Activated CD8-positive, alpha-beta T cell treated with anti-CD3 and anti-CD28 coated beads for 36 hours (primary cell): ENCODE measurements at regions of chr16 and their contacts with region 1.

Region 1: DNA sequence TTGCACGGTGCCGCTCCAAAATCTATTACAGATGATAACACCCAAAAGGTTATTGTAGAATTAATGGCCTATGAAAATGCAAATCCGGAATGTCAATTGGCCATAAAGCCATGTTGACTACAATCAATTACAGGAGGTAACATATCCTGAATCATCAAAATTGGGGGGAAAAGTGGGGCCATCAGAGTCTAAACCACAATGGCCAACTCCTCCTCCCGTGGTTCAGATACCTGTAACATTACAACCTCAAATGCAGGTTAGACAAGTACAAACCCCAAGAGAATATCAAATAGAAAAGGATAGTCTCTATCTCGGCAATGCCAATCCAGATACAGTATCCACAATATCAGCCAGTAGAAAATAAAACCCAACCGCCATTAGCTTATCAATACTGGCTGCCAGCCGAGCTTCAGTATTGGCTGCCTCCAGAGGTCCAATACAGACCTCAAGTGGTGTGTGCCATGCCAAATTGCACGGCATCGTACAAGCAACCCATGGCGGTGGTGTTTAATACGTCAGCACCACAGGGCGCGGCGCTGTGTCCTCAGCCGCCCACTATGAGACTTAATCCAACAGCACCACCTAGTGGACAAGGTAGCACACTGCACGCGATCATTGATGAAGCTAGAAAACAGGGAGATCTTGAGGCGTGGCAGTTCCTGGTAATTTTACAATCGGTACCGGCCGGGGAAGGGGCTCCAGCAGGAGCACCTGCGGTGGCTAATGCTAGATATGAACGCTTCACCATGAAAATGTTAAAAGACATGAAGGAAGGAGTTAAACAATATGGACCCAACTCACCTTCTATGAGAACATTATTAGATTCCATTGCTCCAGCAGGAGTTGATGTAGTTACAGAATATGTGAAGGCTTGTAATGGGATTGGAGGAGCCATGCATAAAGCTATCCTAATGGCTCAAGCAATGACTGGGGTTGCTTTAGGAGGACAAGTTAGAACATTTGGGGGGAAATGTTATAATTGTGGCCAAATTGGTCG is 15.2 kb downstream of the FLYWCH1 start:
- DNase-seq: peak; percentile 95
- ATAC-seq: peak; percentile 99
- H3K4me3 Mint-ChIP-seq: no peak overlapping the region
- H3K27ac Mint-ChIP-seq: no peak overlapping the region
- H3K4me1 Mint-ChIP-seq: peaks cover 10% of the 10 kb centered on the region
- H3K27me3 Mint-ChIP-seq: no peaks in the 10 kb centered on the region
- CTCF ChIP-seq: peak; percentile 96

Region 2: DNA sequence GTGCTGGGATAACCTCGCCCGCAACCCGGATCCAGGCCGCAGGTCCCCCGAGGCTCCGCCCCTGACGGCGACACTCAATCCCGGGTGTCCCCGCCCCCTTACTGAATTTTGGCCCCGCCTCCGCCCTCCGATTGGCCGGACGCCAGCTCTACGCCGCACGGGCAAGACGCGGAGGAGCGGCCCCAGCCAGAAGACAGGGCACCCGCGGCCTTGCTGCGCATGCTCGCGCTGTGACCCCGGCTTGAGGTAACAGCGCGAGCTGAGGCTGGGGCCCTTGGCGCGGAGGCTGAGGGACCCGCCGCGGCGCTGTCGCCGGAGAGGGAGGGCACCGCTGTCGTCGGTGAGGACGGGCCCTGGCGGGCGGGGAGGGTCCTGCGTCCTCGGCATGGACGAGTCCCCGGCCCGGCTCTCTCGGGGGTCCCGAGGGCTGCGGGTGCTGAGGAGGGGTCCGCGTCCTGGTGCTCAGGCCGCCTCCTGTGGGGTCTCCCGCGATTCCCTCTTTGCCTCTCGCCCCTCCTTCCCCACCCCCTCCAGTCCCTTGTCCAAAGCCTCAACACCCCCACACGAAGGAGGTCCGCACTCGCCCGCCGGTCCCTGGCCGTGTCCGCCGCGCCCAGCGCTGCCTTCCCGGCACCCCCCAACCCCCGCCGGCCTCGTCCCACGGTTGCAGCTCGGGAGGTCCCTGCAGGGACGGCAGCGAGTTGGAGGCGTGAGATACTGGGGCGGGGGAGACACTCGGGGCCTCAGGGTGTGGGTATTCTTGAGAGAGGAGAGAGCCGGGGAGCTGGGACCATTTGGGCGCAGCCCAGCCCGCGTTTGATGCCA is 43.7 kb before region 1 on chr16 and contains the start of gene FLYWCH2:
- CTCF ChIA-PET with region 1: interaction called, 27 read pairs
- POLR2A ChIA-PET with region 1: no interaction called
- intact Hi-C with region 1: no loop called
- DNase-seq: peak; percentile 99
- ATAC-seq: peak; percentile 84
- H3K4me3 Mint-ChIP-seq: peak within 1 kb of the TSS; percentile 89
- H3K27ac Mint-ChIP-seq: peak within 1 kb of the TSS; percentile 91
- H3K4me1 Mint-ChIP-seq: peaks cover 13% of the 10 kb centered on the region
- H3K27me3 Mint-ChIP-seq: no peaks in the 10 kb centered on the region
- CTCF ChIP-seq: no peak
- total RNA-seq, gene FLYWCH2: 18.9 to 19.3 TPM

Region 3: DNA sequence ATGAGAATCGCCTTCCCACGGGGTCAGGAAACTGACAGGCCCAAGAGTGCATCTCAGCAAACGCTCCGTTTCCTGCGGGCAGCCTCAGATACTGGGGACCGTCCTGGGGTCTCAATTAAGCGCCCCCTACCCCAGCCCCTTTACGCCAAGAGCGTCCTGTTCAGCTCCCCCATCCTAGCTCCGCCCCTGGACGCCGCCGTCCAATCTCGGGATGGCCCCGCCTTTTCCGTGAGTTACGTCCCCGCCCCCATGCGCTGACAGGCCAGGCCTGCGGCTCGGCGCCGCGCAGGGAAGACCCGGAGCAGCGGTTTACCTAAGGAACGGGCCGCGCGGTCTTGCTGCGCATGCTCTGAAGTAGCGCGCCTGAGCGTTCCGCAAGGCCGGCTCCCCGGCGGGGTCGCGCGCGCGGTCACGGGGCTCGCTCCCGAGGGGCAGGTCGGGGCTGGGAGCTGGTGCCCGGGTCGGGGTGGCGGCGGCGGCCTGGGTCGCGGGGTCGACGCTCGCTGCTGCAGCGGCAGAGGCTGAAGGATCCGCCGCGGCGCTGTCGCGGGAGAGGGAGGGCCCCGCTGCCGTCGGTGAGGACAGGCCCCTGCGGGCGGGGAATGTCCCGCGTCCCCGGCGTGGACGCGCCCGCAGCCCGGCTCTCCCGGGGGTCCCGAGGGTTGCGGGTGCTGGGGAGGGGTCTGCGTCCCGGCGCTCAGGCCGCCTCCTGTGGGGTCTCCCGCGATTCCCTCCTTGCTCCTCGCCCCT is 15.2 kb before region 1 on chr16 and contains the start of gene FLYWCH1:
- CTCF ChIA-PET with region 1: interaction called, 45 read pairs
- POLR2A ChIA-PET with region 1: interaction called, 5 read pairs
- intact Hi-C with region 1: no loop called
- DNase-seq: peak; percentile 99
- ATAC-seq: peak; percentile 99
- H3K4me3 Mint-ChIP-seq: peak within 1 kb of the TSS; percentile 85
- H3K27ac Mint-ChIP-seq: peak within 1 kb of the TSS; percentile 81
- H3K4me1 Mint-ChIP-seq: peaks cover 27% of the 10 kb centered on the region
- H3K27me3 Mint-ChIP-seq: no peaks in the 10 kb centered on the region
- CTCF ChIP-seq: no peak
- total RNA-seq, gene FLYWCH1: 33.4 to 34.9 TPM

Region 4: DNA sequence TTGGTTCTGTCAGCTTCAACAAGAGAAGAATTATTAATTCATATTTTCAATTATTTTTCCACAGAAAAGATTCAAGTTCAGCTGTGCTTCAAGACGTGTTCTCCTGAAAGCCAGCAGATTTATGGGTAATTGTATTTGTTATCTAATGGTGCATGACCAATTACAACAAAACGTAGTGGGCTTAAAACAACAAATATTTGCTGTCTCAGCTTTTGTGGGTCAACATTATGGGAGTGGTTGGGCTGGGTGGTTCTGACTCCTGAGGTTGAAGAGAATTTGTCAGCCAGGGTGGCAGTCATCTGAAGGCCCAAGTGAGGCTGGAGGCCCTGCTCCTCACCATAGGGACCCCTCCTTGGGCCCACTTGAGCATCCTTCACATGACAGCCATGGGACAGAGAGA is 13.0 kb after region 1 on chr16:
- CTCF ChIA-PET with region 1: interaction called, 14 read pairs
- POLR2A ChIA-PET with region 1: interaction called, 3 read pairs
- intact Hi-C with region 1: no loop called
- DNase-seq: no peak
- ATAC-seq: no peak
- H3K4me3 Mint-ChIP-seq: no peak overlapping the region
- H3K27ac Mint-ChIP-seq: no peak overlapping the region
- H3K4me1 Mint-ChIP-seq: peaks cover 5% of the 10 kb centered on the region
- H3K27me3 Mint-ChIP-seq: no peaks in the 10 kb centered on the region
- CTCF ChIP-seq: no peak

Region 5: GRCh38 chr16:3158471-3159314 is 231.7 kb after region 1 on chr16:
- CTCF ChIA-PET with region 1: no interaction called
- POLR2A ChIA-PET with region 1: no interaction called
- intact Hi-C with region 1: no loop called
- DNase-seq: peak; percentile 91
- ATAC-seq: peak; percentile 83
- H3K4me3 Mint-ChIP-seq: peak overlapping the region; percentile 80
- H3K27ac Mint-ChIP-seq: peak overlapping the region; percentile 86
- H3K4me1 Mint-ChIP-seq: peaks cover 26% of the 10 kb centered on the region
- H3K27me3 Mint-ChIP-seq: peaks cover 7% of the 10 kb centered on the region
- CTCF ChIP-seq: no peak